Esophagus muscularis mucosa (tissue), 4 donors: ENCODE measurements at regions of chr9 and their contacts with region 1.

Region 1: DNA sequence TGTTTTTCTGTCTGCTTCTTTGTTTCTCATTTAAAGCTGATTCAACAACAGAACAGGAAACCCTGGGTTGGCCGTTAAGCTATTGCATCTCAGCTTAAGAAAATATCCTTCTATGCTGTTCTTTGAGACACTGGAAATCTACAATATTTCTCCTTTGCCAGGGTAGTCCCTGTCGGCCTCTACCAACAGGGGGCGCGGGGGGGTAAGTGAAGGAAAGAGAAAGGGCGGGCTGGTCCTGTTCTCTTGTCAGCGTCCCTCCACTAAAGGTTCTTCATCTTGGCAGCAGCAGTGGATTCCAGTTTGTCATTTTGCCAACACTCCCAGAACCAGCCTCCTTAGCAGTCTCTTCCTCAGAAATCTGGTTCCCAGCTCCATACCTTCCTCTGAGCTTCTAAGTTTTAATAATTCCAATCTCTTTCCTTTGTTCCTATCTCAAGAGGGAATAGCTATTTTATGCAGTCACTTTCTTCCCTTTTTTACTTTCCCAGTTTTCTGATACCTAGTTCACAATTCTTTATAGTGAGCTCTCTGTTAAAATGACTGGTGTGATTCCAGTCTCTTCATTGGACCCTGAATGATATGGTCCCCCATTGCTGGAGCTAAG is 222.3 kb downstream of the GLIS3 start:
- DNase-seq: peak; percentile 93
- H3K4me3 ChIP-seq: no peak overlapping the region
- H3K27ac ChIP-seq: peak overlapping the region in 3 of 4 donors; percentile 11 to 27 (median 25)
- H3K4me1 ChIP-seq: peaks cover 3 to 44% (median 33%) of the 10 kb centered on the region in 4 donors
- H3K27me3 ChIP-seq: no peaks in the 10 kb centered on the region
- CTCF ChIP-seq: peak; percentile 74 to 78 (median 75)
- EP300 ChIP-seq: no peak
- POLR2A ChIP-seq: no peak

Region 2: GRCh38 chr9:4152876-4153275 is 75.3 kb after region 1 on chr9:
- intact Hi-C with region 1: no loop called
- DNase-seq: peak; percentile 29
- H3K4me3 ChIP-seq: no peak overlapping the region
- H3K27ac ChIP-seq: no peak overlapping the region
- H3K4me1 ChIP-seq: peaks cover 0 to 20% (median 11%) of the 10 kb centered on the region in 4 donors
- H3K27me3 ChIP-seq: no peaks in the 10 kb centered on the region
- CTCF ChIP-seq: no peak
- EP300 ChIP-seq: no peak
- POLR2A ChIP-seq: no peak

Region 3: DNA sequence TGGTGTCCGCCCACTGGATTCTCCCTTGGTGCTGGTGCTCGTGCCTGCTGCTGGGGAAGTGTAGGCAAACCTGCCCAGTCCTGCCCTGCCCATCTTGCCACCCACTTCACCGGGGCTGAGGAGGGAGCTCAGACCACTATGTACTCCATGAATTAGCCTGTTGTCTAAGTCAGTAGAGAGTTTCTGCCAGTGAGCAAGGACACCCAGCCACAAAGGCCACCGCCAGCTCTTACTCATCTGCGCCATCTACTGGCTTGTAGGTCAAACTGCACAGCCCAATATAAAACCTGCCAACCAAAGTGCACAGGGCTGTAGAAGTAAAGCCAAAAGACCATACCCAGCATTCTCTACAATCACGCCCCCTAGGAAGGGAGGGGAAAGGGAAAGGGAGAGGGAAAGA is 119.9 kb after region 1 on chr9:
- intact Hi-C with region 1: loop called (anchors 5 kb)
- DNase-seq: peak; percentile 62
- H3K4me3 ChIP-seq: no peak overlapping the region
- H3K27ac ChIP-seq: no peak overlapping the region
- H3K4me1 ChIP-seq: no peaks in the 10 kb centered on the region
- H3K27me3 ChIP-seq: no peaks in the 10 kb centered on the region
- CTCF ChIP-seq: peak; percentile 41 to 63 (median 54)
- EP300 ChIP-seq: no peak
- POLR2A ChIP-seq: no peak

Region 4: DNA sequence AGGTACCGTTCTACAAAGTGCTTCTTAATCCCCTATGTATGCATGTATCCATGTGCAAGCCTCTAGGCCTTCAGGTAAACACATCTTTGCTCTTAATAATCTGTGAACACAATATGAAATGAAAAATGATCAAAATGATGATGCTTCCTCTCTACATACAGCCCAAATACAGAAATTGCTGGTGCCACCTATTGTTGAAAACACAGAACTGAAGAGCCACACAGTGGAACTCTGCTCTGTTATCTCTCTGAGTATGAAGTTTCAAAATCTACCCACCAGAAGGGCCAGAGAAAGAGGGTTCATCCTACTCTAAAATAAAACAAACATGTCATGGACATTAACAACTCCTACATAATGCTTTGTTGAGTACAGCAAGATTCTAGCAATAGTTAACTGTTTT is 151.0 kb after region 1 on chr9:
- intact Hi-C with region 1: loop called (anchors 2 kb)
- DNase-seq: no peak
- H3K4me3 ChIP-seq: no peak overlapping the region
- H3K27ac ChIP-seq: no peak overlapping the region
- H3K4me1 ChIP-seq: peaks cover 0 to 3% (median 0%) of the 10 kb centered on the region in 4 donors
- H3K27me3 ChIP-seq: no peaks in the 10 kb centered on the region
- CTCF ChIP-seq: peak; percentile 53 to 77 (median 63)
- EP300 ChIP-seq: no peak
- POLR2A ChIP-seq: no peak

Region 5: DNA sequence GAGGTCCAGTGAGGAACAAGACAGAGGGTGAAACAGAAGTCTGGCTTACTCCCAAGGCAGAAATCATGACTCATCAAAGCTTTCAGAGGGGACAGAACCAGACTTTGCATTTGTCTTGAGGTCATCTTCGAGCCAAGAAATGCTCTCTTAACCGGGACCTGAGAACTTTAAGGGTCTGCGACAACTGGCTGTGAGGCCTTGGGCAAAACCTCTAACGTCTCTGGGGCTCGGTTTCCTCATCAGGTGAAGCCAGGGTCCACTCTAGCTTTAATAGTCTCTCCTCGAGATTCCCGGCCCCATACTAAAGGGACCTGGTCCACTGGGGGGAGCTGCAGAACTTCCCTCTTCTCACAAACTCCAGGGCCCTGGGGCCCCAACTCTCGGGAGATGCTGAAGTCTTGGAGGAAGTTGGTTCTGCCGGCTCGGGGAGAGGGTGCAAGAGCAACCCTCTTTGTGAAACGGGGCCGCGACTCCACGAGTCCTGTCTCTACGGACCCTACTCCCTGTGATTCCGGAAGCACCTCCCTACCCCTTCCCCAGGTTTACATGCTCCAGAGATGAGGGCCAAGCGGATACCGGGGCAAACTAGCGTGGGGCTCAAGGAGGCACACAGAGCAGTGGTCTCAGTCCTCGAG is 219.7 kb after region 1 on chr9:
- intact Hi-C with region 1: loop called (anchors 10 kb)
- DNase-seq: peak; percentile 97
- H3K4me3 ChIP-seq: peak overlapping the region; percentile 76 to 87 (median 78)
- H3K27ac ChIP-seq: peak overlapping the region; percentile 89 to 94 (median 92)
- H3K4me1 ChIP-seq: peaks cover 0 to 59% (median 51%) of the 10 kb centered on the region in 4 donors
- H3K27me3 ChIP-seq: no peaks in the 10 kb centered on the region
- CTCF ChIP-seq: peak; percentile 46 to 53 (median 48)
- EP300 ChIP-seq: no peak
- POLR2A ChIP-seq: peak; percentile 11